ENCODE measurements at regions of chr6 and their contacts with region 1.

Region 1: GRCh38 chr6:110873981-110874879 is at the start of gene AMD1:
- DNase-seq: peak; percentile 96 to 97 (median 97)
- H3K4me3 ChIP-seq: peak within 1 kb of the TSS; percentile 44 to 87
- H3K4me3 Mint-ChIP-seq: peak within 1 kb of the TSS; percentile 96 to 100 (median 99)
- H3K27ac ChIP-seq: peak within 1 kb of the TSS; percentile 87
- H3K27ac Mint-ChIP-seq: peak within 1 kb of the TSS; percentile 94 to 100 (median 99)
- H3K4me1 ChIP-seq: peaks cover 29% of the 10 kb centered on the region
- H3K4me1 Mint-ChIP-seq: peaks cover 28 to 51% (median 32%) of the 10 kb centered on the region in 4 donors
- H3K27me3 ChIP-seq: no peaks in the 10 kb centered on the region
- H3K27me3 Mint-ChIP-seq: no peaks in the 10 kb centered on the region
- total RNA-seq, gene AMD1: 62.2 to 63.1 TPM

Region 2: GRCh38 chr6:109934293-109934692 is 939.9 kb before region 1 on chr6:
- CTCF ChIA-PET with region 1: no interaction called
- POLR2A ChIA-PET with region 1: no interaction called
- intact Hi-C with region 1: no loop called
- DNase-seq: no peak
- H3K4me3 ChIP-seq: no peak overlapping the region
- H3K4me3 Mint-ChIP-seq: no peak overlapping the region
- H3K27ac ChIP-seq: no peak overlapping the region
- H3K27ac Mint-ChIP-seq: no peak overlapping the region
- H3K4me1 ChIP-seq: no peaks in the 10 kb centered on the region
- H3K4me1 Mint-ChIP-seq: no peaks in the 10 kb centered on the region
- H3K27me3 ChIP-seq: no peaks in the 10 kb centered on the region
- H3K27me3 Mint-ChIP-seq: peaks cover 0 to 1% of the 10 kb centered on the region in 2 donors

Region 3: GRCh38 chr6:110528101-110528929 is 345.9 kb before region 1 on chr6:
- CTCF ChIA-PET with region 1: interaction called, 21 read pairs
- POLR2A ChIA-PET with region 1: no interaction called
- intact Hi-C with region 1: loop called (anchors 1 kb)
- DNase-seq: peak in 4 of 5 donors; percentile 57 to 61 (median 60)
- H3K4me3 ChIP-seq: no peak overlapping the region
- H3K4me3 Mint-ChIP-seq: no peak overlapping the region
- H3K27ac ChIP-seq: no peak overlapping the region
- H3K27ac Mint-ChIP-seq: no peak overlapping the region
- H3K4me1 ChIP-seq: no peaks in the 10 kb centered on the region
- H3K4me1 Mint-ChIP-seq: peaks cover 0 to 7% (median 3%) of the 10 kb centered on the region in 4 donors
- H3K27me3 ChIP-seq: no peaks in the 10 kb centered on the region
- H3K27me3 Mint-ChIP-seq: no peaks in the 10 kb centered on the region

Region 4: GRCh38 chr6:110682460-110682853 is 191.8 kb before region 1 on chr6:
- CTCF ChIA-PET with region 1: interaction called, 66 read pairs
- POLR2A ChIA-PET with region 1: interaction called, 33 read pairs
- intact Hi-C with region 1: loop called (anchors 1 kb)
- DNase-seq: peak; percentile 76 to 81 (median 78)
- H3K4me3 ChIP-seq: no peak overlapping the region
- H3K4me3 Mint-ChIP-seq: peak overlapping the region in 1 of 8 donors; percentile 0
- H3K27ac ChIP-seq: no peak overlapping the region
- H3K27ac Mint-ChIP-seq: peak overlapping the region in 4 of 7 donors; percentile 60 to 76 (median 69)
- H3K4me1 ChIP-seq: peaks cover 13% of the 10 kb centered on the region
- H3K4me1 Mint-ChIP-seq: peaks cover 11 to 24% (median 16%) of the 10 kb centered on the region in 4 donors
- H3K27me3 ChIP-seq: no peaks in the 10 kb centered on the region
- H3K27me3 Mint-ChIP-seq: no peaks in the 10 kb centered on the region

Region 5: GRCh38 chr6:110890288-110890687 is 16.1 kb after region 1 on chr6:
- CTCF ChIA-PET with region 1: interaction called, 7 read pairs
- POLR2A ChIA-PET with region 1: interaction called, 43 read pairs
- intact Hi-C with region 1: no loop called
- DNase-seq: no peak
- H3K4me3 ChIP-seq: no peak overlapping the region
- H3K4me3 Mint-ChIP-seq: no peak overlapping the region
- H3K27ac ChIP-seq: no peak overlapping the region
- H3K27ac Mint-ChIP-seq: no peak overlapping the region
- H3K4me1 ChIP-seq: peaks cover 30% of the 10 kb centered on the region
- H3K4me1 Mint-ChIP-seq: peaks cover 20 to 36% (median 28%) of the 10 kb centered on the region in 4 donors
- H3K27me3 ChIP-seq: no peaks in the 10 kb centered on the region
- H3K27me3 Mint-ChIP-seq: no peaks in the 10 kb centered on the region

Region 6: DNA sequence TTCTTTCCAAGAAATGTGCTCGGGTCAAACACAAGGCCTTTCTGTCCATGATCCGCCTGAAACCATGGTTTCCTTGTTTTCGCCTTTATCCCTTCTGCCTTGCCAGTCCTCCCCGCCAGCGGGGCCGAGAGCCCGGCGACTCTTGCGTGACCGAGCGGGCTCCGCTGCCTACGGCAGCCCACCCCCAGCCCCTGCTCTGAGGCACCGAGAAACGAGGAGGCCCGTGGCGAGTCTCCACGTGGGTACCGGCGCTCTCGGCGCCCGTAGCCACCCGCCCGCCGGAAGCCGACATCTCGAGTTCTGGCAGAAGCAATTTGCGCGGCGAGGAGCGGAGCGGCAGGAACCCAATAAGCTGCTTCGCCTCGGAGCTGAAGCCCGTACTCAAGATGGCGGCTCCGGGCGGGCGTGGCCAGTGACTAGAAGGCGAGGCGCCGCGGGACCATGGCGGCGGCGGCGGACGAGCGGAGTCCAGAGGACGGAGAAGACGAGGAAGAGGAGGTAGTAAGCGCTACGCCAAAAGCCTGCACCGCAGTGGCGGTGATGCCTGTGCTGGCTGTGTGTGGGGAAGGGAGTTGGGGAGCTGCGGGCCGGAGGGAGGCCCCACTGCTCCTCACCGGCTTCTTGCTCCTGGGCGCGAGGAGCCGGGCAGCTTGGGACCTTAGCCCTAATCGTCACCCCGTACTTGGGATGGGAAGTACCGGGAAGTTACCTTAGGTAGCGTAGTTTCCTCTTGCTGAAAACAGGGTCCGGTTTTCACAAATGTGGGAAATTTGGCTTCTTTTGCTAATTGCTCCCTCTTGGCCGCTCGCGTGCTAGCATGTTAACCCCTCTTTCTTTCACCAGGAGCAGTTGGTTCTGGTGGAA is 84.3 kb after region 1 on chr6 and contains the start of gene GTF3C6:
- CTCF ChIA-PET with region 1: interaction called, 5 read pairs
- POLR2A ChIA-PET with region 1: interaction called, 152 read pairs
- intact Hi-C with region 1: loop called (anchors 1 kb)
- DNase-seq: peak; percentile 90 to 94 (median 92)
- H3K4me3 ChIP-seq: peak within 1 kb of the TSS; percentile 69 to 94
- H3K4me3 Mint-ChIP-seq: peak within 1 kb of the TSS; percentile 95 to 99 (median 98)
- H3K27ac ChIP-seq: peak within 1 kb of the TSS; percentile 82
- H3K27ac Mint-ChIP-seq: peak within 1 kb of the TSS; percentile 91 to 99 (median 98)
- H3K4me1 ChIP-seq: peaks cover 20% of the 10 kb centered on the region
- H3K4me1 Mint-ChIP-seq: peaks cover 11 to 26% (median 17%) of the 10 kb centered on the region in 4 donors
- H3K27me3 ChIP-seq: no peaks in the 10 kb centered on the region
- H3K27me3 Mint-ChIP-seq: no peaks in the 10 kb centered on the region
- total RNA-seq, gene GTF3C6: 28.9 to 35.7 TPM

Region 7: GRCh38 chr6:111027219-111027618 is 153.0 kb after region 1 on chr6:
- CTCF ChIA-PET with region 1: no interaction called
- POLR2A ChIA-PET with region 1: no interaction called
- intact Hi-C with region 1: no loop called
- DNase-seq: no peak
- H3K4me3 ChIP-seq: no peak overlapping the region
- H3K4me3 Mint-ChIP-seq: no peak overlapping the region
- H3K27ac ChIP-seq: no peak overlapping the region
- H3K27ac Mint-ChIP-seq: peak overlapping the region in 1 of 7 donors; percentile 63
- H3K4me1 ChIP-seq: no peaks in the 10 kb centered on the region
- H3K4me1 Mint-ChIP-seq: peaks cover 0 to 4% (median 0%) of the 10 kb centered on the region in 4 donors
- H3K27me3 ChIP-seq: no peaks in the 10 kb centered on the region
- H3K27me3 Mint-ChIP-seq: no peaks in the 10 kb centered on the region

Region 8: DNA sequence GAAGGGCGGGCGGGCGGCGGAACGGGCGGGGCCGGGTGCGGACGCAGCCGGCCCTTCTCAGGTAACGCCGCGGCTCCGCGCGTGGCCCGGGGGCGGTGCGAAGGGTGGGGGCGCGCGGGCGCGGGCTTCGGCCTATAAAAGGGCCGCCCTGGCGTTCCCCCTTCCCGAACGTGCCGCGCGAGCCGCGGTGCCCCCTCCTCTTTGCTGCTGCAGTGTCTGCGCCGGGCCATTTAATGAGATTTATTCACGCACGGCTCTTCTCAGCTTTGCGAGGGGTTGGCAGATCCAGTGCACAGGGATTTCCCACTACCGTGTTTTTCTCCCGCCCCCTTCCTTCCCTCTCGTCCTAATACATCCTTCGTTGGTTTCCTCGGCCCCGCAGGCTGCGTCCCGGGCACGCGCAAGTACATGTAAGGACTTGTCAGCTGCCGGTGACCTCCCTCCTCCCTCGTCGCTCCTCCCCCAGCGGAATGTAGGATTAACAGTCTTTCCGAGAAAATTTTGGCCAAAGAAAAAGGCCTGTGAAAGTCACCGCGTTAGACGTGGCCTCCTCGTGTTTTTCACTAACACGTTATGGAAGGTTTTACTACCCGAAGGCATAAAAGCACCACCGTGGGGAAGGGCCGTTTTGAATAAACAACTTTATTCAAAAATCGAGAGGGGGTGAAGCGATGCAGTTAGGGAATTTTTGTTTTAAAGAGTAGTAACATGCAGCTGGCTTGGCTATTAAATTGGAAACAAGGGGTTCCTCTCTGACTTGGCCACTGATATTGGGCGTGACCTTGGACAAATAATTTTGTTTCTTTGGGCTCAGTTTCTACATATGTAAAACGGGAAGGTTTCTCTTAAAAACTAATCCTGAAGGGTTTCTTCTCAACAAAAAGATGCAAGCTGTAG is 609.8 kb after region 1 on chr6:
- CTCF ChIA-PET with region 1: no interaction called
- POLR2A ChIA-PET with region 1: interaction called, 10 read pairs
- intact Hi-C with region 1: loop called (anchors 10 kb)
- DNase-seq: peak in 3 of 5 donors; percentile 89
- H3K4me3 ChIP-seq: peak overlapping the region; percentile 74
- H3K4me3 Mint-ChIP-seq: peak overlapping the region; percentile 91 to 99 (median 98)
- H3K27ac ChIP-seq: peak overlapping the region; percentile 80
- H3K27ac Mint-ChIP-seq: peak overlapping the region; percentile 97 to 100 (median 98)
- H3K4me1 ChIP-seq: peaks cover 57% of the 10 kb centered on the region
- H3K4me1 Mint-ChIP-seq: peaks cover 33 to 58% (median 45%) of the 10 kb centered on the region in 4 donors
- H3K27me3 ChIP-seq: no peaks in the 10 kb centered on the region
- H3K27me3 Mint-ChIP-seq: peaks cover 0 to 2% of the 10 kb centered on the region in 2 donors